ENCODE measurements at regions of chr1 and their contacts with region 1.

Region 1: DNA sequence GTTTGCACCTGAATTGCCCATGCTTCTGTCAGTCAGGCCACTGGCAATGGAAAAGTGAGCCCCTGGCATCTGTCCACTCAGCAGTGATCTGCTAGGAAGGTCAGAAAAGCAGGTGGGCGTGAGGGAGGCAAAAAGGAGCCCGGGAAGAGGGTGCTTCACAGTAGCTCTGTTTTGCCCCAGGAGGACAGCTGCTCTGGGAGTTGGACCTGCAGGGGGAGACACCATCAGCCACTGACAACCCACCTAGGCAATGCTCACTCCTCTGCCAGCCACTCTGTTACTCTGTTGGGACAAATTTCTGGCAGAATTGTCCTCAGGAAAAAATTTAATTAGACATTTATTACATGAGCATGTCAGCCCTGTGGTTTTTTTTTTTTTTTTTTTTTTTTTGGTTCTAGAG is 146.4 kb downstream of the LRIG2 start:
- DNase-seq: peak; percentile 19
- H3K4me3 Mint-ChIP-seq: no peak overlapping the region
- H3K27ac Mint-ChIP-seq: no peak overlapping the region
- H3K4me1 Mint-ChIP-seq: peaks cover 11% of the 10 kb centered on the region
- H3K27me3 Mint-ChIP-seq: no peaks in the 10 kb centered on the region
- CTCF ChIP-seq: no peak

Region 2: GRCh38 chr1:112674439-112674985 is 544.9 kb before region 1 on chr1 and contains the start of gene MOV10:
- CTCF ChIA-PET with region 1: no interaction called
- intact Hi-C with region 1: no loop called
- DNase-seq: peak; percentile 48
- H3K4me3 Mint-ChIP-seq: peak within 1 kb of the TSS; percentile 90
- H3K27ac Mint-ChIP-seq: peak within 1 kb of the TSS; percentile 94
- H3K4me1 Mint-ChIP-seq: peaks cover 23% of the 10 kb centered on the region
- H3K27me3 Mint-ChIP-seq: no peaks in the 10 kb centered on the region
- CTCF ChIP-seq: no peak
- total RNA-seq, gene MOV10: 71.4 and 80.0 TPM in 2 replicates

Region 3: GRCh38 chr1:113325039-113325438 is 105.7 kb after region 1 on chr1:
- CTCF ChIA-PET with region 1: no interaction called
- intact Hi-C with region 1: loop called (anchors 10 kb)
- DNase-seq: peak; percentile 47
- H3K4me3 Mint-ChIP-seq: no peak overlapping the region
- H3K27ac Mint-ChIP-seq: peak overlapping the region; percentile 48
- H3K4me1 Mint-ChIP-seq: peaks cover 17% of the 10 kb centered on the region
- H3K27me3 Mint-ChIP-seq: no peaks in the 10 kb centered on the region
- CTCF ChIP-seq: no peak